ENCODE measurements at regions of chr6 and their contacts with region 1.

Region 1: GRCh38 chr6:139219271-139219729 is 72.5 kb downstream of the TXLNB start:
- DNase-seq: peak; percentile 82 to 89 (median 89)
- H3K4me3 ChIP-seq: no peak overlapping the region
- H3K27ac ChIP-seq: no peak overlapping the region
- H3K4me1 ChIP-seq: peaks cover 0 to 10% (median 6%) of the 10 kb centered on the region in 4 experiments
- H3K27me3 ChIP-seq: no peaks in the 10 kb centered on the region

Region 2: GRCh38 chr6:139124887-139125672 is 94.2 kb before region 1 on chr6:
- CTCF ChIA-PET with region 1: interaction called, 15 read pairs
- POLR2A ChIA-PET with region 1: no interaction called
- DNase-seq: peak; percentile 83 to 91 (median 85)
- H3K4me3 ChIP-seq: peak overlapping the region in 2 of 7 experiments; percentile 28 to 48
- H3K27ac ChIP-seq: peak overlapping the region in 1 of 2 experiments; percentile 17
- H3K4me1 ChIP-seq: peaks cover 11 to 29% (median 16%) of the 10 kb centered on the region in 4 experiments
- H3K27me3 ChIP-seq: no peaks in the 10 kb centered on the region

Region 3: DNA sequence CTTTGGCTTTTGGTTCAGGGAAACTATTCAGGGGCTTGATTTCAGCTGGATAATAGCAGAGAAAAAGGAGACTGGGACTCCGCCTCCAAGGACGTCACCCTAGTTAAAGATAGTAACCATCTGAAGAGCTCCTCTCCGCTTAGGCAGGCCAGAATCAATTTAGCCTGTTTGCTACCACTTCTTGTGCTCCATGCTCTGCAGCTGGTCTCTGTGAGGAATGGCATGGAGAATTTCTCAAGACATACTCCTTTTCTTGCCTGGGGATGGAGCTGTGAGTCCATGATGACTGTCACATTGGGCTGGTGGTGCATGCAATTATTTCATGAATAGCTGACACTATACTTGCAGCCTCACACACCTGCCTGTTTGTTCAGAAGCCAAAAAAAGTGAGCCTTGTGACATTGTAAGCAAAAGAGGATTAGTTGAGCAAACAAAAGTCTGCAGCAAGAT is 11.1 kb after region 1 on chr6:
- CTCF ChIA-PET with region 1: interaction called, 13 read pairs
- POLR2A ChIA-PET with region 1: no interaction called
- DNase-seq: peak; percentile 23 to 46 (median 42)
- H3K4me3 ChIP-seq: no peak overlapping the region
- H3K27ac ChIP-seq: no peak overlapping the region
- H3K4me1 ChIP-seq: peaks cover 0 to 9% (median 0%) of the 10 kb centered on the region in 4 experiments
- H3K27me3 ChIP-seq: no peaks in the 10 kb centered on the region

Region 4: GRCh38 chr6:139852488-139853140 is 633.3 kb after region 1 on chr6:
- CTCF ChIA-PET with region 1: no interaction called
- POLR2A ChIA-PET with region 1: no interaction called
- DNase-seq: no peak
- H3K4me3 ChIP-seq: no peak overlapping the region
- H3K27ac ChIP-seq: no peak overlapping the region
- H3K4me1 ChIP-seq: peaks cover 0 to 3% (median 1%) of the 10 kb centered on the region in 4 experiments
- H3K27me3 ChIP-seq: no peaks in the 10 kb centered on the region